GM23248 (cell line): ENCODE measurements at regions of chr3 and their contacts with region 1.

Region 1: DNA sequence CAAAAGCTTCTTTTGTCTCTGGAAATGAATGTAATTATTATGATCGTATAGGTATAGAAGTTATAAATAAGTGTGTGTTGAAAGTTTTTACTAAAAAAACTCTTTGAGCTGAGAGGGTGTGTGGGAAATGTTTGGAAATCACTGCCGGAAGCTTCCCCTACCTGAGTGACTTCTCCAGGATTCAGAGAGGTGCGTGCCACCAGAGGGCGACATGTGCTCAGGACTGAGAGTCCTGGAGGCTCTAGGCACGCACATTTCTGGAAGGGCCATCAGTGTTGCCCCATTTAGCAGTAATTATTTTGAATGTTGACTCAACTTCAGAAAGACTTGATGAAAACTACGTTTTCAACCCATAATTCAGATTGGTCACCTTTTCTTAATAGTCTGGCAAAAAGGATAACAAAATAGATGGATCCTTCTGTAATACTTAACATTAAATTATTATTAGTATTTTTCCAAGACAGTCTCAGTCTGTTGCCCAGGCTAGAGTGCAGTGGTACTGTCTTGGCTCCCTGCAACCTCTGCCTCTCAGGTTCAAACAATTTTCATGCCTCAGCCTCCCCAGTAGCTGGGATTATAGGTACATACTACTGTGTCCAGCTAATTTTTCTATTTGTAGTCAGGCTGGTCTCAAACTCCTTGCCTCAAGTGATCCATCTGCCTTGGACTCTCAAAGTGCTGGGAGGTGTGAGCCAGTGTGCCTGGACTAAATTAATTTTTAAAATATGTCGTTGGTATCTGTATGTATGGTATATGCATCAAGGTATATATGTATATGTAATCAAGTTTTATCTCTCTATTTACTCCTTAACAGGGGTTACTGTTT is 34.5 kb downstream of the GPR171 start:
- DNase-seq: peak; percentile 83
- H3K4me3 ChIP-seq: no peak overlapping the region
- H3K27ac ChIP-seq: no peak overlapping the region
- H3K4me1 ChIP-seq: no peaks in the 10 kb centered on the region
- H3K27me3 ChIP-seq: no peaks in the 10 kb centered on the region

Region 2: GRCh38 chr3:151227807-151228665 is 59.6 kb after region 1 on chr3:
- in situ Hi-C with region 1: loop called (anchors 10 kb)
- DNase-seq: peak; percentile 80
- H3K4me3 ChIP-seq: no peak overlapping the region
- H3K27ac ChIP-seq: peak overlapping the region; percentile 60
- H3K4me1 ChIP-seq: peaks cover 36% of the 10 kb centered on the region
- H3K27me3 ChIP-seq: no peaks in the 10 kb centered on the region

Region 3: DNA sequence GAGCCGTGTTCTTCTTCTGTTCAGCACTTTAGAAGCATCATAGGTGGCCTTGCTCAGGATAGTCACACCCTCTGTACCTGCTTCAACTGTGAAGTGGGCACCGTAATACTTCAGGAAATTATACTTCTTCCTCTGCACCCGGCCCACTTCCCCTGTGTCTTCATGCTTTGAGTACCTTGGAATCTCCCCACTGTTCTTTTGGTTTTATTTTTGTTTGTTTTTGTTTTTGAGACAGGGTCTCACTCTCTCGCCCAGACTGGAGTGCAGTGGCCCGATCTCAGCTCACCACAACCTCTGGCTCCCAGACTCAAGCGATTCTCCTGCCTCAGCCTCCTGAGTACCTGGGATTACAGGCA is 108.2 kb after region 1 on chr3:
- in situ Hi-C with region 1: loop called (anchors 5 kb)
- DNase-seq: no peak
- H3K4me3 ChIP-seq: no peak overlapping the region
- H3K27ac ChIP-seq: no peak overlapping the region
- H3K4me1 ChIP-seq: no peaks in the 10 kb centered on the region
- H3K27me3 ChIP-seq: no peaks in the 10 kb centered on the region